ENCODE measurements at regions of chr2 and their contacts with region 1.

Region 1: GRCh38 chr2:133484106-133484505 is 84.2 kb downstream of the NCKAP5 start:
- DNase-seq: peak; percentile 76
- H3K4me3 ChIP-seq: no peak overlapping the region
- H3K27ac ChIP-seq: no peak overlapping the region
- H3K4me1 ChIP-seq: peaks cover 9% of the 10 kb centered on the region
- H3K27me3 ChIP-seq: no peaks in the 10 kb centered on the region
- CTCF ChIP-seq: no peak

Region 2: GRCh38 chr2:133377021-133377481 is 107.1 kb before region 1 on chr2:
- CTCF ChIA-PET with region 1: no interaction called
- dilution Hi-C with region 1: no loop called
- in situ Hi-C with region 1: no loop called
- intact Hi-C with region 1: no loop called
- DNase-seq: peak; percentile 70
- H3K4me3 ChIP-seq: no peak overlapping the region
- H3K27ac ChIP-seq: peak overlapping the region; percentile 46
- H3K4me1 ChIP-seq: peaks cover 45% of the 10 kb centered on the region
- H3K27me3 ChIP-seq: no peaks in the 10 kb centered on the region
- CTCF ChIP-seq: no peak

Region 3: DNA sequence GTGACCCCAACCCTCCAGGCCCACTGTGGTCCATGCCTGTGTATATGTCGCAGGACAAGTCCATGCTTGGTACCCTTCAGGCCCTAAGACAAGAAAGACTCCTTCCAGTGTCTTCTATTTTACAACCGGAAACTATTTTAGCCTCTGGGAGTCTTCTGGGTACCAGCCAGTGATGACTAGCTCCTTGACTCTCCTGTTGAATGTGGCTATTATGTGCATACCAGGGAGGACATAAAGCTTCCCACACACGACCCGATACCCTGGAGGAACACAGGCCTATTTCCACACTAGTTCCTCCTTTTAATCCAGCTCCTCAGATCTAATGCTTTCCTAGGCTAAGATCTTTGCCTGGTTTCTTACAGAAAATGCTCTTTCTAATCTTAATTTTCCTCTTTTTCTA is 94.0 kb before region 1 on chr2:
- CTCF ChIA-PET with region 1: no interaction called
- dilution Hi-C with region 1: loop called (anchors 5 kb)
- in situ Hi-C with region 1: no loop called
- intact Hi-C with region 1: no loop called
- DNase-seq: peak; percentile 88
- H3K4me3 ChIP-seq: no peak overlapping the region
- H3K27ac ChIP-seq: peak overlapping the region; percentile 66
- H3K4me1 ChIP-seq: peaks cover 23% of the 10 kb centered on the region
- H3K27me3 ChIP-seq: no peaks in the 10 kb centered on the region
- CTCF ChIP-seq: no peak

Region 4: GRCh38 chr2:133497270-133497893 is 13.3 kb after region 1 on chr2:
- CTCF ChIA-PET with region 1: no interaction called
- dilution Hi-C with region 1: no loop called
- in situ Hi-C with region 1: no loop called
- intact Hi-C with region 1: loop called (anchors 2 kb)
- DNase-seq: peak; percentile 50
- H3K4me3 ChIP-seq: no peak overlapping the region
- H3K27ac ChIP-seq: no peak overlapping the region
- H3K4me1 ChIP-seq: peaks cover 4% of the 10 kb centered on the region
- H3K27me3 ChIP-seq: no peaks in the 10 kb centered on the region
- CTCF ChIP-seq: no peak

Measured in mammary epithelial cell (primary cell).